HEK293 (cell line): ENCODE measurements at regions of chr16 and their contacts with region 1.

Region 1: GRCh38 chr16:4358831-4359561 is 7.9 kb upstream of the PAM16 start:
- H3K4me3 ChIP-seq: no peak overlapping the region
- H3K27ac ChIP-seq: no peak overlapping the region
- H3K4me1 ChIP-seq: no peaks in the 10 kb centered on the region
- CTCF ChIP-seq: peak; percentile 73

Region 2: DNA sequence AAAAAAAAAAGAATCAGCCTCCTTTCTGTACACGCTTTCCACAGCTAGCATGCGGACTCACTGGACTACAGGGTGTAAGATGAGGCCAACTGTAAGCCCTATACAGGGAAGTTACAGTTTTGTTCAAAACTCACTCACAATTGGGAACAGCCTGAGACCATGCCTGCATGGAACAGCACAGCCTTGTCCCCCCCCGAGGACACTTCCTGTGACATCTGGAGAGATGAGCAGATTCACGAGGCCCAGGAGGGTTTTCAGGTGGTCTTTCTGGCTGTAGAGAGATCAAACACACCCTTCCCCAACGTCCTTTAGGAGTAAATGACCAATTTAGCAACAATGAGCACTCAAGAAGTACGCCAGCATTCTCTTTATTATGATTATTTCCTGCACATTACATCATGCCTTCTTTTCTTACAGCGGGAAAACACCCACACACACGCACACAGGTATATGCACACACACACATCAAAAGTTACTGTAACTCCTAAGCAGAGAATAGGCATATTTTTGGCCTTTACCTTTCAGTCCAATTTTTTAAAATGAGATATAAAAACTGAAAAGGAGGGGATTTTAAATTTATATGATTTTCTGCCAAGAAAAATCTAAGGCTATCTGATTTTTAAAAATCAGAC is 281.8 kb before region 1 on chr16:
- CTCF ChIA-PET with region 1: no interaction called
- POLR2A ChIA-PET with region 1: no interaction called
- H3K4me3 ChIP-seq: no peak overlapping the region
- H3K27ac ChIP-seq: no peak overlapping the region
- H3K4me1 ChIP-seq: no peaks in the 10 kb centered on the region
- CTCF ChIP-seq: no peak

Region 3: DNA sequence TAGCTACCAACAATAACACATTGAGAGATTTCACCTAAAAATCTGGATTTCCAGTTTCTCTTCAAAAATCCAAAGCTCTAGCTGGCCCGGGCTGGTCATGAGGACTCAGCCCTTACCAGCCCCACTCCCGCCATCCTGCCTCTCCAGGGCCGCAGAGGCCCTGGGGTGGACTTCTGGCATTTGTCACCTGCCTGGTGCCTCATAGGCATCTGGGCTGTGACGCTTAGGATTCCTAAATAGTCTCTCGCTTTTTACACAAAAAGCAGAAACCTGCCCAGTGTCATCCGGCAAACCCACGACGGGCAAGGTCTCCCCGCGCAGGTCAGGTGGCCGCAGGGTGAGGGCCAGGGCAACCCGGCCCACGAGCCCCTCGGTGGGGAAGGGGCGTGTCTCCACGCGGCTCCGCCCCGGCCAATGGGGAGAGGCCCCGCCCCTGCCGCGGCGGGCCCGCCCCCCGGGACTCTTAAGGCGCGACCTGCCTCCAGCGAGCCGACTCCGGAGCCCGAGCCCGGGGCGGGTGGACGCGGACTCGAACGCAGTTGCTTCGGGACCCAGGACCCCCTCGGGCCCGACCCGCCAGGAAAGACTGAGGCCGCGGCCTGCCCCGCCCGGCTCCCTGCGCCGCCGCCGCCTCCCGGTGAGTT is 12.5 kb after region 1 on chr16 and contains the start of gene VASN:
- CTCF ChIA-PET with region 1: interaction called, 12 read pairs
- POLR2A ChIA-PET with region 1: interaction called, 3 read pairs
- H3K4me3 ChIP-seq: peak within 1 kb of the TSS; percentile 45
- H3K27ac ChIP-seq: no peak within 1 kb of the TSS; the same call in 1 of the 2 replicates
- H3K4me1 ChIP-seq: peaks cover 21% of the 10 kb centered on the region
- CTCF ChIP-seq: no peak

Region 4: DNA sequence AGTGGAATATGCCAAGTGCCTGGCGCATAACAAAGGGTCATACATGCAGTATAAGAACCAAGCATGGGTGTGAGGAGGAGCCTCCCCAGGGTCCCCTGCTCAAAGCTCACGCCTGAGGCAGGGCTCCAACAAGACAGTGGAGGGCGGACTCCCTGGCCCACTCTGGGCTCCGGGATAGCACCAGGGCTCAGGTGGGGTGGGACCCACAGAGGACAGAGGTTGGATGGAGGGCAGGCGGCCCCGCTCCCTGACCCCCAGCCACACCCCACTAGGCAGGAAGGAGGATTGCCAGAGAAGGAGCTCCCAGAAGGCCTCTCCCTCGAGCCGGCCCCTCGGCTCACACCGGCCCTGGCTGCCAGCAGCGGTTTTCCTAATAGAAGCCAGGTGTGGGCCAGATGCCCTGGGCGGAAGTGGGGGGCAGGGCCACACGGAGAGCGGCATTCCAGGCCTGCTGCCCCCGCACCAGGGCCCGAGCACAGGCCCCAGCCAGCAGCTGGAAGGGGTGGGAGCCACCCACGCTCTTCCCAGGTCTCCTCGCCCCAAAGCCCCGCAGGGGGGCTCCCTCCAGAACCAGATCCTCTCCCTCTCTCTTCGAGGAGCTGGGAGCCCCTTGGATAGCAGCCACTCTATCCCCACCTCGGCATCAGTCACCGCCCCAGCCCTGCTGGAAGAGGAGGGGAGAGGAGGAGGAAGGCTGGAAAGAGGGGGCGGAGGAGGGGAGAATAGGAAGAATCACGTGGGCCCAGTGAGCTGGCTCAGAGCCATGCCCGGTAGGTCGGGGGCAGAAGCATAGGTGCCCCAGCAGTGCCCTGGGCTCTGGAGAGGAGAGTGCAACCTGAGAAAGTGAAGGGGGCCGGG is 33.6 kb after region 1 on chr16:
- CTCF ChIA-PET with region 1: interaction called, 10 read pairs
- POLR2A ChIA-PET with region 1: no interaction called
- H3K4me3 ChIP-seq: no peak overlapping the region
- H3K27ac ChIP-seq: no peak overlapping the region
- H3K4me1 ChIP-seq: no peaks in the 10 kb centered on the region
- CTCF ChIP-seq: no peak